A673 (cell line): ENCODE measurements at regions of chr9 and their contacts with region 1.

Region 1: GRCh38 chr9:27726244-27727081 is 153.2 kb upstream of the C9orf72 start:
- DNase-seq: peak; percentile 88
- H3K4me3 ChIP-seq: no peak overlapping the region
- H3K27ac ChIP-seq: no peak overlapping the region
- H3K4me1 ChIP-seq: peaks cover 10% of the 10 kb centered on the region
- H3K27me3 ChIP-seq: peaks cover 3% of the 10 kb centered on the region
- CTCF ChIP-seq: peak; percentile 88

Region 2: DNA sequence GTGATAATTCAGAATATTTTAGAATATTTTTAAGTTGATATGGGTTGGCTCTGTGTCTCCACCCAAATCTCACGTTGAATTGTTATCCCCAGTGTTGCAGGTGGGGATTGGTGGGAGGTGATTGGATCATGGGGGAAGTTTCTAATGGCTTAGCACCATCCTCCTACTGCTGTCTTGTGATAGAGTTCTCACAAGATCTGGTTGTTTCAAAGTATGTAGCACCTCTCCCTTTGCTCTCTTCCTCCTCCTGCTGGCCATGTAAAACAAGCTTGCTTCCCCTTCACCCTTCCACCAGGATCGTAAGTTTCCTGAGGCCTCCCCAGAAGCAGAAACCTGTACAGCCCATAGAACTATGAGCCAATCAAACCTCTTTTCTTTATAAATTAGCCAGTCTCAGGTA is 61.4 kb after region 1 on chr9:
- CTCF ChIA-PET with region 1: no interaction called
- POLR2A ChIA-PET with region 1: no interaction called
- intact Hi-C with region 1: loop called (anchors 1 kb)
- DNase-seq: peak; percentile 48
- H3K4me3 ChIP-seq: no peak overlapping the region
- H3K27ac ChIP-seq: no peak overlapping the region
- H3K4me1 ChIP-seq: peaks cover 8% of the 10 kb centered on the region
- H3K27me3 ChIP-seq: no peaks in the 10 kb centered on the region
- CTCF ChIP-seq: peak; percentile 49; the same call in 1 of the 2 replicates

Region 3: GRCh38 chr9:27943501-27943900 is 217.0 kb after region 1 on chr9:
- CTCF ChIA-PET with region 1: no interaction called
- POLR2A ChIA-PET with region 1: no interaction called
- intact Hi-C with region 1: no loop called
- DNase-seq: no peak
- H3K4me3 ChIP-seq: no peak overlapping the region
- H3K27ac ChIP-seq: no peak overlapping the region
- H3K4me1 ChIP-seq: no peaks in the 10 kb centered on the region
- H3K27me3 ChIP-seq: no peaks in the 10 kb centered on the region
- CTCF ChIP-seq: no peak

Region 4: DNA sequence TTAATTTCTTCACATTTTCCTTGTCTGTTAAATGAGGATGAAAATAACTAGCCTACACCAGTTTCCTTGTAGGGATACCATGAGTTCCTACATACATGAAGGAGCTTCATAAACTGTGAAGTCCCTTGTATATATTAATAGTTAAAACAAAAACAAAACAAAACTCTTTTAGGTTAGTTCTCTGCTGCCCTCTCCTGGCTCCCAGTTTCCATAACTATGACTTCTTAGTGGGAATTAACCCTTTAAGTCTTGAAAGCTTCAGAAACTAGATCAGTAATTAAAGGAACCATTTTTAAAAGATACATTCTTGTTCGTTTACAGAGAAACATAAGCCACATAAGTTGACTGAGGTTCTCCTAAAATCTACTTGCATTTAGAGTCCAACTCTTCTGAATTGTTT is 346.8 kb after region 1 on chr9:
- CTCF ChIA-PET with region 1: interaction called, 8 read pairs
- POLR2A ChIA-PET with region 1: no interaction called
- intact Hi-C with region 1: loop called (anchors 1 kb)
- DNase-seq: peak; percentile 75
- H3K4me3 ChIP-seq: no peak overlapping the region
- H3K27ac ChIP-seq: no peak overlapping the region
- H3K4me1 ChIP-seq: no peaks in the 10 kb centered on the region
- H3K27me3 ChIP-seq: no peaks in the 10 kb centered on the region
- CTCF ChIP-seq: peak; percentile 76

Region 5: GRCh38 chr9:28105001-28105400 is 378.5 kb after region 1 on chr9:
- CTCF ChIA-PET with region 1: no interaction called
- POLR2A ChIA-PET with region 1: no interaction called
- intact Hi-C with region 1: no loop called
- DNase-seq: no peak
- H3K4me3 ChIP-seq: no peak overlapping the region
- H3K27ac ChIP-seq: no peak overlapping the region
- H3K4me1 ChIP-seq: no peaks in the 10 kb centered on the region
- H3K27me3 ChIP-seq: no peaks in the 10 kb centered on the region
- CTCF ChIP-seq: no peak